Endothelial cell of umbilical vein (primary cell): ENCODE measurements at regions of chr4 and their contacts with region 1.

Region 1: GRCh38 chr4:57163530-57164459 is 53.6 kb upstream of the IGFBP7 start:
- DNase-seq: peak; percentile 95
- H3K4me3 ChIP-seq: peak overlapping the region; percentile 19 to 58 (median 49)
- H3K27ac ChIP-seq: peak overlapping the region; percentile 22
- H3K4me1 ChIP-seq: no peaks in the 10 kb centered on the region
- H3K27me3 ChIP-seq: peaks cover 15 to 20% of the 10 kb centered on the region in 2 experiments
- CTCF ChIP-seq: peak; percentile 77 to 98
- POLR2A ChIP-seq: no peak

Region 2: DNA sequence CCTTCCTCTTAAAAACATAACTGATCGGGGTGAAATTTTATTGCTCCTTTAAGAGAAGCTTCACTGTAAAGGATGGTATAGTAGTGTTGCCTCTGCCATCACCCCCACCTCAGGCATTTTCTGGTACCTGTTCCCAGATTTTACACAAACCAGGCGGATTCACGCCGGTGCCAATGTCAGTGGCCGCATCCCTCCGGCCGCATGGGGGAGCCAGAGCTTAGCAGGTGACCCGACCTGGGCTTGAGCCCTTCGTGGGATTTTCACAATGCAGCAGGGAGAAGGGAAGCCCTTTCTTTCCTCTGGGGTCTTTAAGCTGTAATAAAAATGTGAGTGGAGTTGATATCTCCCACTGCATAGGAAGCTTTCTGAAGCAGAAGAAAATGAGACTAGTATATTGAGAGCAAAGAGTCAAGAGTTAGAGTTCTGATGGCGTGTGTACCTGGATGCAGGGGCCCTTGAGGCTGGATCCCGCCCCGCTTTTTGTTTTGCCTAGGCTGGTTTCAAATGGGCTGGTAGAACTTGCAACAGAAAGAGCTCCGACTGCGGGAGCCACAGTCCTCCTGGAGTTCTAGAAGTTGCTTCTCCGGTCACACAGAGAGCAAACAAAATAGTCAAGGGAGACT is 125.7 kb before region 1 on chr4:
- CTCF ChIA-PET with region 1: interaction called, 67 read pairs
- POLR2A ChIA-PET with region 1: interaction called, 3 read pairs
- dilution Hi-C with region 1: no loop called
- intact Hi-C with region 1: loop called (anchors 1 kb)
- DNase-seq: peak; percentile 59
- H3K4me3 ChIP-seq: no peak overlapping the region
- H3K27ac ChIP-seq: no peak overlapping the region
- H3K4me1 ChIP-seq: peaks cover 9% of the 10 kb centered on the region
- H3K27me3 ChIP-seq: no peaks in the 10 kb centered on the region
- CTCF ChIP-seq: peak; percentile 88 to 90
- POLR2A ChIP-seq: no peak

Region 3: DNA sequence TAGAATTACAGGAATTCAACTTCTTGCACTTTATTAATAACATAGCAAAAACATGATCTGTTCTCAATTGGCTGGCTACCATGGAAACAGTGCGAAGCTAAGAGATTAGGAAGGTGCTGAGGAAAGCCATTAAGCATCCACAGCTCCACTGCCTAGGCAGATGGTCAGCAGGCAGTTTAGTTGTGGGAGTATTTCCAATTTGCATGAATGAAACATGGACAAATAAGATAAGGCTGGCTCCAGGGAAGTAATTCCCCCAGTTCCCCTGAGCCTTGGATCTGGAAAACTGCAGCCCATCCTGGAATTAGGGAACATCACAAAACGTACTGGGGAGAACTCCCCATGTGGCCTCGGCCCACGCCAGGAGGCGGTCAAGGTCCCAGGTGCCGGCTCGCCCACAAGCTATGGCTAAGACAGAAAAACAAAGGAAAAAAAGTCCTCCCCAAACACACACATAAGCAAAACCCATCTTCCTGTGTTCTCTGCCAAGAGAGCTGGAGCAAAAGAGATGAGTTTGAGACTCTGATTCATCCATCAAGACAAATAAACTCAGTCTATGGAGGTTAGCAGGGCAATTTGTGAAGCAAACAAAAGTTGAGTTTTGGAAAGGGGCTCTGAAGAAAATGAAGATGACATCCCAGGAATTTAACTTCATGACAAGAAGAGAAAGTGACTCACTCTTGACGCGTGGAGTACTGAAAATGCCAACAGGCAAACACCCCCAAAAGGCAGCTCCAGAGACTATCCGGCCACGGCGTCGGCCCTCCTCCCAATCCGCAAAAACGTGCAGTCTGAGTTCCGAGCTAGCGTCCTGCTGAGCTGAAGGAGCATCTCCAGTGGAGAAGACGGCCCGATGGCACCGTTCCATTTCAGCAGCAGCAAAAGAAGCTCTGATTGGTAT is 98.7 kb before region 1 on chr4:
- CTCF ChIA-PET with region 1: interaction called, 13 read pairs
- POLR2A ChIA-PET with region 1: no interaction called
- dilution Hi-C with region 1: no loop called
- intact Hi-C with region 1: no loop called
- DNase-seq: peak; percentile 87
- H3K4me3 ChIP-seq: peak overlapping the region in 1 of 3 experiments; percentile 15
- H3K27ac ChIP-seq: peak overlapping the region; percentile 65
- H3K4me1 ChIP-seq: peaks cover 33% of the 10 kb centered on the region
- H3K27me3 ChIP-seq: no peaks in the 10 kb centered on the region
- CTCF ChIP-seq: no peak
- POLR2A ChIP-seq: no peak

Region 4: DNA sequence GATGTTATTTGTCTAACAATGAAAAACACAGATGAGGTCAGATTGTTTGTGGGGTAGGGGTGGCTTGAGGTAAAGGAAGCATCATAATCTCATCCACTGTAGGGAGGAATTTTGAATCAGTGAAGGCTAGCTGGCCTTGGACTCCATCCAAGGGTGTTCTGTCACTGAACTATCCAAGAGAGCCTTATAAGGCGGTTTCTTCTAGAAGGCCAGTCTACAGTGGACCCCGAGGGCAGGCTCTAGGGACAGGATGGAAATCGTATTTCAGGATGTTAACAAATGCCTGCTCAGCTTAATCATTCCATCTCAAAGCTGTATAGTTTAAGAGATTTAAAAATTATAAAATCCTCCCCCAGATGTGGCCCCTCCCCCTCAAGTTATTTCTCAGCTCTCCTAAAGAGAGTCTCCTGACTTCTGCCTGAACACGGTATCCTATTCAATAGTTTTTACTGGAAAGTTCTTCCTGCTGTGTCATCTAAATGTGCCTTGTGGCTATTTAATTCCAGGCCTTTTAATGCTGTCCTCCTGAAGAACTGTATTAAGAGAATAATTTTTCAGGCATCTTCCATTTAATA is 61.7 kb before region 1 on chr4:
- CTCF ChIA-PET with region 1: interaction called, 28 read pairs
- POLR2A ChIA-PET with region 1: no interaction called
- dilution Hi-C with region 1: no loop called
- intact Hi-C with region 1: loop called (anchors 1 kb)
- DNase-seq: peak; percentile 94
- H3K4me3 ChIP-seq: no peak overlapping the region
- H3K27ac ChIP-seq: peak overlapping the region; percentile 75
- H3K4me1 ChIP-seq: peaks cover 45% of the 10 kb centered on the region
- H3K27me3 ChIP-seq: no peaks in the 10 kb centered on the region
- CTCF ChIP-seq: no peak
- POLR2A ChIP-seq: no peak

Region 5: GRCh38 chr4:57119054-57119651 is 44.6 kb before region 1 on chr4:
- CTCF ChIA-PET with region 1: interaction called, 18 read pairs
- POLR2A ChIA-PET with region 1: no interaction called
- dilution Hi-C with region 1: no loop called
- intact Hi-C with region 1: no loop called
- DNase-seq: peak; percentile 82
- H3K4me3 ChIP-seq: no peak overlapping the region
- H3K27ac ChIP-seq: peak overlapping the region; percentile 51
- H3K4me1 ChIP-seq: peaks cover 21% of the 10 kb centered on the region
- H3K27me3 ChIP-seq: no peaks in the 10 kb centered on the region
- CTCF ChIP-seq: no peak
- POLR2A ChIP-seq: no peak

Region 6: GRCh38 chr4:57200928-57201327 is 37.1 kb after region 1 on chr4:
- CTCF ChIA-PET with region 1: interaction called, 12 read pairs
- POLR2A ChIA-PET with region 1: no interaction called
- dilution Hi-C with region 1: no loop called
- intact Hi-C with region 1: no loop called
- DNase-seq: no peak
- H3K4me3 ChIP-seq: no peak overlapping the region
- H3K27ac ChIP-seq: no peak overlapping the region
- H3K4me1 ChIP-seq: no peaks in the 10 kb centered on the region
- H3K27me3 ChIP-seq: peaks cover 8 to 13% of the 10 kb centered on the region in 2 experiments
- CTCF ChIP-seq: no peak
- POLR2A ChIP-seq: no peak